ENCODE measurements at regions of chr14 and their contacts with region 1.

Region 1: GRCh38 chr14:41137741-41138140 is 468.9 kb upstream of the LRFN5 start:
- DNase-seq: no peak
- H3K4me3 ChIP-seq: no peak overlapping the region
- H3K27ac ChIP-seq: no peak overlapping the region
- H3K4me1 ChIP-seq: no peaks in the 10 kb centered on the region
- H3K27me3 ChIP-seq: no peaks in the 10 kb centered on the region
- CTCF ChIP-seq: no peak
- EP300 ChIP-seq: no peak
- POLR2A ChIP-seq: no peak

Region 2: DNA sequence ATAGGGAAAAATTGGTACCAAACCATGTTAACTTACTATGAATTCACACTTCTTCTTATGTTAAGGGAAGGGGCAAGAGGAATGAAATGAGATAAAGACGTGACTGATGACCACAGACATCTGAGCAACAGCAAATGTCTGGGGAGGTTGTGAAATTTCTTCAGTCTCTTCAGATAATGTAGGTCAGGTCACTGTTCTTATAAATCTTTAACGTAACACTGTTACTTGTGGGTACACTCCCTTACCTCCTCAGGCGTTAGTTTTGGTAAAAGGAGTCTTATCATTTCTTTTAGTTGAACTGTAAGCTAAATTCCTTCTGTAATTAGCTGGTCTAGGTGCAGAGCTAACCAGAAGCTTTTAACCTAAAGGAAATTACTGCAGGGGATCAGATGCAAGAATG is 64.0 kb after region 1 on chr14:
- in situ Hi-C with region 1: loop called in 1 of 4 experiments (anchors 10 kb)
- intact Hi-C with region 1: no loop called
- DNase-seq: no peak
- H3K4me3 ChIP-seq: no peak overlapping the region
- H3K27ac ChIP-seq: no peak overlapping the region
- H3K4me1 ChIP-seq: no peaks in the 10 kb centered on the region
- H3K27me3 ChIP-seq: no peaks in the 10 kb centered on the region
- CTCF ChIP-seq: no peak
- EP300 ChIP-seq: no peak
- POLR2A ChIP-seq: no peak

Region 3: GRCh38 chr14:42140831-42141279 is 1003.1 kb after region 1 on chr14:
- in situ Hi-C with region 1: no loop called
- intact Hi-C with region 1: no loop called
- DNase-seq: no peak
- H3K4me3 ChIP-seq: no peak overlapping the region
- H3K27ac ChIP-seq: no peak overlapping the region
- H3K4me1 ChIP-seq: no peaks in the 10 kb centered on the region
- H3K27me3 ChIP-seq: no peaks in the 10 kb centered on the region
- CTCF ChIP-seq: no peak
- EP300 ChIP-seq: no peak
- POLR2A ChIP-seq: no peak